ENCODE measurements at regions of chrX and their contacts with region 1.

Region 1: GRCh38 chrX:133402042-133402453 is 13.2 kb downstream of the GPC4 start:
- DNase-seq: no peak

Region 2: DNA sequence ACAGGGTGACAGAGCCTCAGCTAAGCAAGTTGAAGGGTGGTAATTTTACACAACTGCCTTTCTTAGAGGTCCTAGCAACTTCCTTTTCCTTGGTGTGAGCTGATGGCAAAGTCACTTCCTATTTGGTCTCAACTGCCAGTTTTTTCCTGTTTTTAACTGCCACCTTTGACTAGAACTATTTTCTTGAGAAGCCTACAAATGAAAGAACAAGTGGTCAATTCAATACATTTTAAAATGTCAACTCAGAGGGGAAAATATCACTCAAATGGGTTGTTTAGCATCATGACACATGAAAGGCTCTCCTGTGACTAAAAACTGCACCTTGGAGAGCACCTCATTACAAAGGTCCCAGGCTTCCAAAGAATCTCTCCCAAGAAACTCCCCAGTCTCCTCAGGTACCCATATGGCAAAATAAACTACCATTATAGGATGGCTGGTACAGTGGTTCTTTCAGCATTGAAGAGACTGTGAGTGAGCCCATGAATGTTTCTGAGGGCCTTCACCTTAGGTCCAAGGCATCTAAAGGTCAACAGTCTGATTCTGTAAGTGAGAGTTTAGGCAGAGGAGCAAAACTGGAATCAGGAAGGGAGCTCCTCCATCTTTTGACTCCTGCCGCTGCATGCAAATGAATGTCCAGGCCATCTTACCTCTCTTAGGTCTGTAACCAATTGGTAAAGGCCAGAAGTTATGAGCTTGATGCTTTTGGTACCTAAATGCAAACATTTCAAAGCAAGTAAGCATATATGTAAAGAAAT is 1384.4 kb before region 1 on chrX:
- CTCF ChIA-PET with region 1: interaction called, 11 read pairs
- POLR2A ChIA-PET with region 1: no interaction called
- DNase-seq: no peak